ENCODE measurements at regions of chr20 and their contacts with region 1.

Region 1: GRCh38 chr20:354298-355064 is 7.6 kb downstream of the NRSN2 start:
- DNase-seq: no peak
- H3K4me3 ChIP-seq: no peak overlapping the region
- H3K27me3 ChIP-seq: no peaks in the 10 kb centered on the region
- CTCF ChIP-seq: peak; percentile 93

Region 2: GRCh38 chr20:371755-372542 is 17.5 kb after region 1 on chr20:
- CTCF ChIA-PET with region 1: interaction called, 19 read pairs
- POLR2A ChIA-PET with region 1: no interaction called
- DNase-seq: peak; percentile 53
- H3K4me3 ChIP-seq: no peak overlapping the region
- H3K27me3 ChIP-seq: no peaks in the 10 kb centered on the region
- CTCF ChIP-seq: no peak

Region 3: DNA sequence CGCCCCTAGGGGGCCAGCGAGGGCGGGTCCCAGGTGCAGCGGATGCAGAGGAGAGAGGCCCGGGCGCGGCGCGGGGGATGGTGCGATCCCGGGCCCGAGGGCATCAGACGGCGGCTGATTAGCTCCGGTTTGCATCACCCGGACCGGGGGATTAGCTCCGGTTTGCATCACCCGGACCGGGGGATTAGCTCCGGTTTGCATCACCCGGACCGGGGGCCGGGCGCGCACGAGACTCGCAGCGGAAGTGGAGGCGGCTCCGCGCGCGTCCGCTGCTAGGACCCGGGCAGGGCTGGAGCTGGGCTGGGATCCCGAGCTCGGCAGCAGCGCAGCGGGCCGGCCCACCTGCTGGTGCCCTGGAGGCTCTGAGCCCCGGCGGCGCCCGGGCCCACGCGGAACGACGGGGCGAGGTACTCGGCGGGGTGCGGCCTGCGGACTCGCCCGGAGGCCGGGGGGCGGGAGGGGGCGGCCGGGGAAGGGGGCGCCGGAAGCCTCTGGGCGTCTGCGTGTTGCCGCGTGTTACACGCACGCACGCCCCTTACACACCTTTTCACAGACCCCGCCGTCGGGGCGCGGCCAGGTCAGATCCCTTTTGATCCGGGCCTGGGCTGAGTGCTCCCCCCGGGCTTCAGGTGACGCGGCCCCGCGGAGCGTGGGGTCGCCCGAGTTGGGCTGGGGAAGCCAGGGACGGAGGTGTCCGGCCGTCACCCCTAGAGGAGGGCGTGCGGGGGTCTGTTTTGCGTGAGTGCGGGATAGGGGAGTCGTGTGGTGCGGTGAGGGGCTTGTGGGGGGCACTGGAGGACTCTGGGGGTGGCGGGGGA is 26.5 kb after region 1 on chr20:
- CTCF ChIA-PET with region 1: interaction called, 11 read pairs
- POLR2A ChIA-PET with region 1: no interaction called
- DNase-seq: no peak
- H3K4me3 ChIP-seq: peak overlapping the region; percentile 94
- H3K27me3 ChIP-seq: no peaks in the 10 kb centered on the region
- CTCF ChIP-seq: no peak

Region 4: GRCh38 chr20:401682-402495 is 47.4 kb after region 1 on chr20:
- CTCF ChIA-PET with region 1: interaction called, 12 read pairs
- POLR2A ChIA-PET with region 1: no interaction called
- DNase-seq: peak; percentile 35
- H3K4me3 ChIP-seq: no peak overlapping the region
- H3K27me3 ChIP-seq: no peaks in the 10 kb centered on the region
- CTCF ChIP-seq: no peak

Region 5: DNA sequence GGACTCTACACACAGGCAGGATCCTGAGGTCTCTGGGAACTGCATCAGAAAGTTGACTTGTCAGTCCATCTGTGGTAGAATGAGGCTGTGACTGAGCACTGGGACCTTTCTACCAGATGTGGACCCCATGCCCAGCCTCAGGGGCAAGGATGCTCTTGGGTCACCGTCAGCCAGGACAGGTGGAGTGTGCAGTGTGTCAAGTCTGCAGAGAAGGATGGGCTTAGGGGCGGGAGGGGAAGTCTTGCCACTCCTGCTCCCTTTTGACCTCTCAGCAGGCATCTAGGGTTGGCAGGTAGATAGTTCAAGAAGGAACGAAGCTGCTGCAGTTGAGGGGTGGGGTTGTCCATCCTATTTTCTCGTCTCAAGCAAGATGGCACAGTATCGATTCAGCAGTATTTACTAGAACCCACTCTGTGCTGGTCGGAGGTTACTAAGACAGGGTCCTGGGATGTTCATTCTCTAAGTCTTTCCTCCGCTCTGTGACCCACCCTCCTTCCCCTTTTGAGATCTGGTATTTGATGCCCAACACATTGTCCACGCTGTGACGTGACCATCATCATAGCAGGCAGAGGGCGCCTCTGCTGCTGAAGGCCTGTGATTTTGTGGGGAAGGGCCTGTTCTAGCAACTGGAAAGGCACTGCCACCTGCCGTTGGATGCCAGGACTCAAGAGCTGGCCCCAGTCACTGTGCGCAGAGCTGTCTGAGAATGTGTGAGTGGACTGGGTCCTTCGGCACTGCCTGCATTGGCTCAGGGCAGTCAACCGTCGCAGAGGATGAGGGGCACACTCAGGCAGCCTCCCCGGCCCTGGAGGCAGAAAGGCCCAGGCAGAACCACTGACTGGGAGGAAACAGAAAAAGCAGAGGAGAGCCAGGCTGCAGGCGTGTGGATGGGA is 76.8 kb after region 1 on chr20:
- CTCF ChIA-PET with region 1: interaction called, 32 read pairs
- POLR2A ChIA-PET with region 1: no interaction called
- DNase-seq: no peak
- H3K4me3 ChIP-seq: no peak overlapping the region
- H3K27me3 ChIP-seq: no peaks in the 10 kb centered on the region
- CTCF ChIP-seq: peak; percentile 75

Region 6: DNA sequence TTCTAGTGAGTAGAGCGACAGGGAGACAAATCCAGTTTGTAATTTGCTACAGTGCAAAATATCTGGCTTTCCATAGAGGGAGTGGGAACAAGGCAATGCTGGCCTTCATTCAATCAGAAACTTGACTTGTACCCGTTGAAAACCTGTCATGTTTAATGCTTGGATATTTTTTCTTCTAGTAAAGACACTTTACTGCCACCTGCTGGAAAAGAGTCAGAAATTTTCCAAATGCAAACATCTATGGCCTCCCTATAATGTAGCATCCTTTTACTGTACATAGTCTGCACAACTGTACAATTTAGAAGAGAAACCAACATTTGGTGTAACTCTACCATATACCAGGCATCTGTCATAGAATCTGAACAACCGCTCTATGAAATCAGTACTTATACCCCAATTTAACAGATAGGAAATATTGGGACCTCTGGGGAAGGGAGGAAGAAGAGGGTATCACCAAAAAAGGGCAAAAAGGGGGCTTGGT is 124.5 kb after region 1 on chr20:
- CTCF ChIA-PET with region 1: interaction called, 43 read pairs
- POLR2A ChIA-PET with region 1: no interaction called
- DNase-seq: no peak
- H3K4me3 ChIP-seq: no peak overlapping the region
- H3K27me3 ChIP-seq: no peaks in the 10 kb centered on the region
- CTCF ChIP-seq: peak; percentile 50; the same call in 1 of the 2 replicates

Region 7: GRCh38 chr20:487655-488054 is 133.2 kb after region 1 on chr20:
- CTCF ChIA-PET with region 1: interaction called, 11 read pairs
- POLR2A ChIA-PET with region 1: no interaction called
- DNase-seq: no peak
- H3K4me3 ChIP-seq: no peak overlapping the region
- H3K27me3 ChIP-seq: no peaks in the 10 kb centered on the region
- CTCF ChIP-seq: no peak

Region 8: DNA sequence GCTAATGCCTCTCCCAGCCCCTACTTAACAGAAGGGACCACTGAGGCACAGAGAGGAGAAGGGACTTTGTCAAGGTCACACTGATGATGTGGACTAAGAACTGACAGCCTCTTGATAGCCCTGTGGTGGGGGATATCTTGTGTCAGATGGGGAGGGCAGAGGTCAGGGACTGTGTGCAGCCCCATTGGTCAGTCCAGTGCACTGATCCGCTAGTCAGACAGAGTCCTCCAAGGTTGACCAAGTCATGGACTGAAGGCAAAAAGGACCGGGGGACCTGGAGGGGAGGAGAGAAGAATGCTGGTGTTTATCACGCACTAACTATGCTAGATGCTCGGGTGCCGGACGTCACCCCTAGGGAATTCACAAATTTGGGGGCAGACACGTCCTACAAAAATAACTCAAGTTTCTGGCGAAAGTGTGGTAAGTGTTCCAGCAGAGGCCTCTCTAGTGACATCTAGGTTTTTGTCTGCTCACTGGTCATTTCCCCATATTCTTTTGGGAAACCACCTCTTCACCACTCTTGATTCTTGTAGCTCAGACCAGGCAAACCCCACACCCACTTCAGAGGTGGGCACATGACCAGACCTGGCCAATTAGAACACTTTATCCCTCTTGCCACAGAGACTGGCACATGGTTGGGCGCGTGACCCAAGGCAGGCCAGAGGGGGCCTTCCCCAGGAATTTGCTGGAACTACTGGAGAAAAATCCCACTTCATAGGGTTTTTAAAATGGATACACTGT is 234.6 kb after region 1 on chr20:
- CTCF ChIA-PET with region 1: no interaction called
- POLR2A ChIA-PET with region 1: no interaction called
- DNase-seq: no peak
- H3K4me3 ChIP-seq: no peak overlapping the region
- H3K27me3 ChIP-seq: peaks cover 1% of the 10 kb centered on the region; the same call in 1 of the 2 replicates
- CTCF ChIP-seq: no peak

Measured in BJ (cell line).